PC-3 (cell line): ENCODE measurements at regions of chr4 and their contacts with region 1.

Region 1: DNA sequence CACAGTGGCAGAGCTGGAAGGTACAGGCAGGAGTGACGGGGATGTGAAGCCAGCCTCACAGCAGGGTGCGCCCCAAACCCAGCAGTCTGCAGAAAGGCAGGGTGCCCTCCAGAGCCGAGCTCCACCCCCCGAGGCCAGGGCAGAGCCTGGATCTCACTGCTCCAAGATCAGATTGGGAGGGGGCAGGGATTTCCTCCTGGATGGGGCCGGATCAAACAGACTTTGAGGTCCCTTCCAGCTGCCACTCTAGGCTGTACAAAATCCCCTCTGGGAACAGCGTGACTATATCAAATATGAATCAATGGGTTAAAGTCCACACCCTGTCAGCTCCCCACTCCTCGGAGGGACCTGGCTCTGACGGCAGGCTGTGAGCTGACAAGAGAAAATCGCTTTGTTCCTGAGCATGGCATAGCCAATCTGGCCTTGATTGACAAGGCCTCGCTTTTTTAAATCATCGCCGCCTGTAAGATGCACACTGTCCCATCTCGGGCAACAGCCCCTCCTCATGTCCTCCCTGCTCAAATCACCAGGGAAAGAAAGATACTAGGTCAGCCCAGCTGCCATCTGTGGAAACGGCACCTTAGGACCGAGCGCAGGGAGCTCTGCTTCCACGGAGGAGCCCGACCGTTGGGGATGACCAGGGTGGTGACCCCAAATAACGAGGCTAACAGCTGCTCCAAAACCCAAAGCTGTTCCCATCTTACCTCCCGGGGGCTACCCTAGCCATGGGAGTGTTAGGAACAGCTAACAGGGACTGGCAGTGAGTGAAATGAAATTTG is 39.9 kb downstream of the PSAPL1 start:
- DNase-seq: no peak
- ATAC-seq: no peak
- H3K4me3 ChIP-seq: no peak overlapping the region
- H3K27ac ChIP-seq: no peak overlapping the region
- H3K4me1 ChIP-seq: peaks cover 15% of the 10 kb centered on the region; the same call in 1 of the 2 replicates
- H3K27me3 ChIP-seq: no peaks in the 10 kb centered on the region
- CTCF ChIP-seq: no peak

Region 2: DNA sequence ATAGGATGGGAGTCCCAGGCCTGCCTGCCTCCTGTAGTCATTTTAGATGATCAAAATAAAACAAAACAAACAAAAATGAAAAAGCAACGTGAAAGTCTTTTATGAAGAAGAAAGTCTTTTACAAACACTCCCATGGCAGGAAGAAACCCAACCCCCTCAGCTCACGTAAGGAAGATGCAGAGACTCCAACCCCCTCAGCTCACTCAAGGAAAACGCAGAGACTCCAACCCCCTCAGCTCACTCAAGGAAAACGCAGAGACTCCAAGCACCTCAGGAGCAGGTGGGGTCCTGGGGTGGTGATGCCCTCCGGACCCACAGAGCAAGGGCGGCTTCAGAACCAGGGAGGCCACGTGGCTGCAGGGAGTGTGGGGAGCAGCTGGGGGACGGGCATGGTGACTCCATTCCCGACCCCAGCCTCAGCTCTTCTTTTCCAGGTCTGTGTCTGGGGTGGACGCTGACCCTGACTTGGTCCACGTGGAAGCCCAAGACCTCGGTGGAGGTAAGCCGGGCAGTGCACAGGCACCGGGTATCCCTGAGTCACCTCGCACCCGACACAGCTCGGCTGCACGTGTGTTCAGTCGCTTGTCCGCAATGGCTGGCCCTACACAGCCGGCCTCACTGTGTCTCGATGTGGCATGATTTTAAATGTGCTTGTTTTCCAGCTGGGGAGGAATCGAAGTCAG is 266.3 kb after region 1 on chr4:
- CTCF ChIA-PET with region 1: no interaction called
- POLR2A ChIA-PET with region 1: interaction called, 38 read pairs
- intact Hi-C with region 1: no loop called
- DNase-seq: no peak
- ATAC-seq: no peak
- H3K4me3 ChIP-seq: no peak overlapping the region
- H3K27ac ChIP-seq: no peak overlapping the region
- H3K4me1 ChIP-seq: no peaks in the 10 kb centered on the region
- H3K27me3 ChIP-seq: no peaks in the 10 kb centered on the region
- CTCF ChIP-seq: no peak